ENCODE measurements at regions of chr7 and their contacts with region 1.

Region 1: GRCh38 chr7:40329601-40330153 is 194.9 kb downstream of the SUGCT start:
- DNase-seq: peak; percentile 75
- ATAC-seq: peak; percentile 62
- H3K4me3 ChIP-seq: no peak overlapping the region
- H3K27ac ChIP-seq: no peak overlapping the region
- H3K4me1 ChIP-seq: no peaks in the 10 kb centered on the region
- H3K27me3 ChIP-seq: no peaks in the 10 kb centered on the region
- CTCF ChIP-seq: peak; percentile 77

Region 2: DNA sequence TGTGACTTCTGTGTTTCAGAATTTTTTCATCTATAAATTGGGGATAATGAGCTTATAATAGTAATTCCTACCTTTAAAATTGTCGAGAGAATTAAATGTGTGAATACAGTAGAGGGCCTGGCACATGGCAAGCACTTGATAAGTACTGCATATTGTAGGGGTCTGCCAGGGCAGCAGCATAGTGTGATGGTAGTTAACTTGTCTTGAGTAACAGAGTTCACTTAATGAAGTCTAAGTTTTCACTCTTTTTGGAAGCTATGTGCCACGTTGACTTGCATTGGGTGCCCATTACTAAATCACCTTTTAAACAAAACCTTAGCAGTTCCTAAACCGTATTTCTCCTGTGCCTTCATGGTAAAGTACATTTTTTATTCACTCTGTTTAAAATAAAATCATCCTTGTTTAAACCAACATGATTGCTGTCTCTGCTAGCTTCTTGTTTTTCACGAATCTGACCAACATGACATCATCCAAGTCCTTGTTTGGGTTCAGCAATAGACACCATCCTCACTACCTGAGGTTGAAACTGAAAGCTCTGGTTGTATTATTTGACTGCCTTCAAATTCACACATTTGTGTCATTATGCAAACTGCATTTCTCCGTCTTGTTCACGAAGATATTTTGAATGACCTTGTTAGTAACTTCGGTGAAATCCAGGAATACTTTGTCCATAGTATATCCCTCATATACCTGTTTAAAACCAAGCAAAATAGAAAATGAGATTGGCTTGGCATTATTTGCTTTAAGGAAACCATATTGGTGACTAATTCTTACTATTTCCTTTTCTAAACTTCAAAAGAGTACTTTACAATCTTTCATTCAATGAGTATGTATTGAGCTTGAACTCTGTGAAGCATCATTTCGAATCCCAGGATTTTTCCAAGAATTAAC is 145.4 kb after region 1 on chr7:
- CTCF ChIA-PET with region 1: no interaction called
- POLR2A ChIA-PET with region 1: no interaction called
- intact Hi-C with region 1: loop called (anchors 5 kb)
- DNase-seq: peak; percentile 19
- ATAC-seq: peak; percentile 45
- H3K4me3 ChIP-seq: no peak overlapping the region
- H3K27ac ChIP-seq: no peak overlapping the region
- H3K4me1 ChIP-seq: peaks cover 8% of the 10 kb centered on the region
- H3K27me3 ChIP-seq: no peaks in the 10 kb centered on the region
- CTCF ChIP-seq: no peak

Region 3: DNA sequence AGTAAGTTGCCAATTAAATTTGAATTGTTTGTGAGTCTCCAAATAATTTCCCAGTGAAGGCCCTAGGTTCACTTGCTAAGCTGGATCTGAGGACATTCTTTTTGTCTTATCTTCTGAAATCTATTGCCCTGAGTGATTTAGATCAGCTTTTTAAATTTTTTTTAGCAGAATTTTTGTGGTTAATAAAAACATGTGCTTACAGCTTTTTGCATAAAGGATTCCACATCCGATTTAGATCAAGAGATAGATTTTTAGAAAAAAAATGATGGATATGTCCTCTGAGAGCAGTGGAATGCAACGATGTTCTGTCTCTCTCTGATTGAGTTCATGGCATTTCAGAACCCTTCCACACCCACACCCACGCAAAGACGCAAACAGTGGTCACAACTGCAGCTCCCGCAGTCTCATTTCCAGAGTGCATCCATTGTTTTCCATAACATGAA is 164.0 kb after region 1 on chr7:
- CTCF ChIA-PET with region 1: no interaction called
- POLR2A ChIA-PET with region 1: no interaction called
- intact Hi-C with region 1: no loop called
- DNase-seq: no peak
- ATAC-seq: no peak
- H3K4me3 ChIP-seq: no peak overlapping the region
- H3K27ac ChIP-seq: no peak overlapping the region
- H3K4me1 ChIP-seq: no peaks in the 10 kb centered on the region
- H3K27me3 ChIP-seq: no peaks in the 10 kb centered on the region
- CTCF ChIP-seq: no peak

Region 4: GRCh38 chr7:40608321-40609075 is 278.8 kb after region 1 on chr7:
- CTCF ChIA-PET with region 1: no interaction called
- POLR2A ChIA-PET with region 1: no interaction called
- intact Hi-C with region 1: no loop called
- DNase-seq: peak; percentile 69
- ATAC-seq: peak; percentile 58
- H3K4me3 ChIP-seq: no peak overlapping the region
- H3K27ac ChIP-seq: no peak overlapping the region
- H3K4me1 ChIP-seq: peaks cover 11% of the 10 kb centered on the region
- H3K27me3 ChIP-seq: no peaks in the 10 kb centered on the region
- CTCF ChIP-seq: no peak

Region 5: DNA sequence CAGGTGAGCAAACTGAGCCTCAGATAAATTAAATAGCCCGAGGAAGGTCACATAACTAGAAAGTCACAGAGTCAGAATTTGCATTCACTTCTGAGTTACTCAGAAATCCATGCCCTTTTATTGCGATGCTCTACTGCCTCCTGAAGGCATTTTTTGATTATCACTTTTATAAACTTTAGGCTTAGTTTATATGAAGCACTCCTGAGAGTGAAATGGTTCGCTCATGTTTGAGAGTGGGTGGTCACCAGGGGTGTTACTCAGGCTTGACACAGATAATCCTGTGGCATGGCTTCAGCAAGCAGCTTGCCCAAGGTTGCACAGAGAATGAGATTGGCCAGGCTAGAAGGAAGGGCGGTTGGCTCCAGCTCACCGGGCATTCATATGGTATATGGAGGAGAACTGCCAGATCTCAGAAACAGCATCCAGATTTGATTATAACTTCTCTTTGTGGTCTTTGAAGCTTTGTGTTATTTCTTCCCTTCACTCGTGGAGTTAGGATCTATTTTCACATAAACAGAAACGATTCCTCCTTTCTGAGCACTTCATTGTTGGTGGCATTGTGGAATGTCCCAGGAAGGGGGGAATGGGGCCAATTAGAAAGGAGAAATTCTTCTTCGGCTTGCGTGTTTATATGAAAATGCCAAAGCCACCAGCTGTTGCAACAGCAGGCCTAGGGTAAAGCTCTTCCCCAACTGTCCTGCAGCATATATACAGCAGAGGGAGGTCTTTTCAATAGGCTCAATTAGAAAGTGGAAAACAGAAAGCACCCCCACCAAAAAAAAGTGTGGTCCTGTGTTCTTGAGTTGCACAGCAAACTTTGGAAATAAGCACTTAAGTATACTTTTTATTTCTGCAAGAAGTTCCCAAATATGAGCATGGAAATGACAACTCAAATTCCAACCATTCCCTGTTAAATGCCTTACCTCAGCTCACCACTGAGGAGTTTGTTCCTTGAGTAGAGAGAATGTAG is 433.9 kb after region 1 on chr7:
- CTCF ChIA-PET with region 1: no interaction called
- POLR2A ChIA-PET with region 1: no interaction called
- intact Hi-C with region 1: loop called (anchors 1 kb)
- DNase-seq: peak; percentile 33
- ATAC-seq: peak; percentile 71
- H3K4me3 ChIP-seq: no peak overlapping the region
- H3K27ac ChIP-seq: no peak overlapping the region
- H3K4me1 ChIP-seq: no peaks in the 10 kb centered on the region
- H3K27me3 ChIP-seq: no peaks in the 10 kb centered on the region
- CTCF ChIP-seq: peak; percentile 27

Region 6: DNA sequence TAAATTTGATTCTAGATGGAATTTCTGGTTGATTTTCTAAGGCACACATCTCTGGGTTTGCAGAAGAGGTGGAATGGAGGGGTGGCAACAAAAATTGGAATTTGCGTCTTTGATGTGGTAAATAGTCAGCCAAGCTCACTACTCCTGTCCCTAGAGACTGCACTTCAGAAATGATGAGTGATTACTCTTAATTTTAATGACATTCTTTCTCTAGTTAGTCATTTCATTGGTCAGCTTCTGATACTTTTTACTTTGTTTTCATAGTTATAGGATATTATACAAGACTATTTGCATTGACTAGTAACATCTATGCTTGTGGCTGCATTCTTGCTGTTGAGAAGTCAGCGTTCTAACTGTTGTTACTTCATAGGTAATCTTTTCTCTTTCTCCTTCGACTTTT is 463.5 kb after region 1 on chr7:
- CTCF ChIA-PET with region 1: no interaction called
- POLR2A ChIA-PET with region 1: interaction called, 11 read pairs
- intact Hi-C with region 1: no loop called
- DNase-seq: peak; percentile 71
- ATAC-seq: peak; percentile 95
- H3K4me3 ChIP-seq: no peak overlapping the region
- H3K27ac ChIP-seq: no peak overlapping the region
- H3K4me1 ChIP-seq: peaks cover 8% of the 10 kb centered on the region; the same call in 1 of the 2 replicates
- H3K27me3 ChIP-seq: no peaks in the 10 kb centered on the region
- CTCF ChIP-seq: no peak

Region 7: DNA sequence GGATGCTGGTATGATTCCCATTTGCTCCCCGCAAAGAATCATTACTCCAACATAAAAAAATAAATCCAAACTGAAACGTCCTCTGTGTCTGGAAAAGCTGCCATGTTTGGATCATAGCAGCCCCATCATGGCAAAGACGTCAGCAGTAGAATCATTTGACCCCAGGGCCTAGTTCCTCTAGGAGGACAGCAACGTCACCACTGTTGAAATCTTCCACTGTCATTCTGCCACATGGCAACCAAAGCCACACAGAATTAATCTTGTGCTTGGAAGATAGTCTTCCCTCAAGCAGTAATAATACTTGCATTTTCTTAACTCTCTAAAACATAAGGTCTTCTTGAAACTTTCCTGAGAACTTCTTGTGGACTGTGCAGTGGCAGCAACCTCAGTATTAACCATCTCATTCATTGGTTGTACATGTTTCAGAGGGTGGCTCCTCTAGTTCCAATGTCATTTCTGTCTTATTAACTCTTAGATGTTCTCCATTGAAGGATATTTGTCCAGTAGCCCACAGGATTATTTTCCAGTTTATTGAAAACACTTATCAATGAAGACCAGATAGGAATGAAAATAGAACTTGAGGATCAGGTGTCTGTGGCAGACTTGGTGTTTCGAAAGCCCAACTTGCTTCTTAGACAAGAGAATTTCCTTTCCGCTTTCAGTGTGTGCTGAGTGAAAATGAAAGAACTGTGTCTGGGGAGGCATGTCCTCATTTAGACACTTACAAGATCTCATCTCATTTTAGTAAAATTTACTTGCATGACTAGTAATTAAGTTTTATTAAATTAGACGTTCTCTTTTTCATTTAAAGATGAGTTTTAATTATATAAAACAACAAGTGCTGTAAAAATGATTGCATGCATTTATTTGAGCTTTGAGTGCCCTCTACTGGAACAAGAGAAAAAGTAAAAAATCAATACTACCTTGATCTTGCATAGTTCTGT is 1402.1 kb after region 1 on chr7:
- CTCF ChIA-PET with region 1: no interaction called
- POLR2A ChIA-PET with region 1: no interaction called
- intact Hi-C with region 1: loop called (anchors 1 kb)
- DNase-seq: peak; percentile 44
- ATAC-seq: no peak
- H3K4me3 ChIP-seq: no peak overlapping the region
- H3K27ac ChIP-seq: no peak overlapping the region
- H3K4me1 ChIP-seq: peaks cover 17% of the 10 kb centered on the region
- H3K27me3 ChIP-seq: no peaks in the 10 kb centered on the region
- CTCF ChIP-seq: peak; percentile 75

Measured in PC-3 (cell line).